CD8-positive, alpha-beta T cell (primary cell): ENCODE measurements at regions of chr22 and their contacts with region 1.

Region 1: GRCh38 chr22:23786752-23787599 is at the start of gene SMARCB1:
- DNase-seq: peak; percentile 79 to 94 (median 90)
- ATAC-seq: peak; percentile 86
- H3K4me3 ChIP-seq: peak within 1 kb of the TSS; percentile 74
- H3K4me3 Mint-ChIP-seq: peak within 1 kb of the TSS; percentile 89
- H3K27ac ChIP-seq: peak within 1 kb of the TSS; percentile 87 to 97
- H3K27ac Mint-ChIP-seq: peak within 1 kb of the TSS; percentile 93
- H3K4me1 ChIP-seq: peaks cover 37% of the 10 kb centered on the region
- H3K4me1 Mint-ChIP-seq: peaks cover 47% of the 10 kb centered on the region
- H3K27me3 ChIP-seq: no peaks in the 10 kb centered on the region
- H3K27me3 Mint-ChIP-seq: no peaks in the 10 kb centered on the region
- CTCF ChIP-seq: no peak
- total RNA-seq, gene SMARCB1: 47.1 to 51.7 TPM

Region 2: DNA sequence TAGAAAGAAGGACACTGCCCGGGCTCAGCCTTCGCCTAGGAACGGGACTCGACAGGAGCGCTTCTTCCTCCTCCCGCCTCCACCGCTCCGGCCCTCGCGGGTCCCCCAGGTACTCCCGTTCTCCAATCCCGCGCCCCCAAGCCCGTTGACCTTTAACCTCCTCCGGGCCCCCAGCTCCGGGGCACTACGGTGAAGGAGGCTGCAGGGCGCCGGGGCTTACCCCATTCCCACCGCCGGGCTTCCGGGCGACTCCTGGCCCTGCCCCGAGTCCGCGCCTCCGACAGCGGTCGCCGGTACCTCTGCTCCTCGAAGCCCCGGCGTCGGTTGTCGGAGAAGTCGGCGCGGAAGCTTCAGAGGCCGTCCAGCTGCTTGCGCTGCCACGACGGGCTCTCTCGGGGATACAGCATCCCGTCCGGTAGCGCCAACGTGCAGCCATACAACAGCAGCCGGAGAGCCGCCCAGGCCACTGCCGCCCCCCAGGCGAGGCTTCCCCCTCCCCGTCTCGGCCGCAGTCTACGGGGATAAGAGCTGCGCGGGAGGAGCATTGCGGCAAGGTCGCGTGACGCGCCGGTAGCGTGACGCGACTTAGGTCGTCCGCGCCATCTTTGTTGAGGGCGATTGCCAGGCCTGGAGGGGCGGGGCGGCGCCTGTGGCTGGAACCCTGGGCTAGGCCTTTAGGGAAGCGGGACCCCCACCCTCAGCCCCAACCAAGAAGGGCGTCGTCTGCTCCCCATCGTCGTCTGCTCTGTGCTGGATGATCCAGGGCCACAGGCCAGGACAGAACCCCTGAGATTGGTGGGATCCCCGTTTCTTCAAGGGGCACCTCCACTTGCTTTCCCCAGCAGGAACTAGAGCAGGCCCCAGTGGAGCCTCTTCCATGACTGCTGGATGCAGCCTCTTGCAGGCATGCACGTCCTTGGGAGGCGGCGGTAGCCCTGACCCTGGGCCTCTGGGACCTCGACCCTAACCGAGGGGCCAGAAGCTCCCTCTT is 69.9 kb before region 1 on chr22:
- CTCF ChIA-PET with region 1: no interaction called
- POLR2A ChIA-PET with region 1: interaction called, 4 read pairs
- intact Hi-C with region 1: loop called (anchors 1 to 2 kb)
- DNase-seq: peak; percentile 66 to 91 (median 83)
- ATAC-seq: peak; percentile 96
- H3K4me3 ChIP-seq: peak overlapping the region; percentile 94 to 99
- H3K4me3 Mint-ChIP-seq: peak overlapping the region; percentile 82
- H3K27ac ChIP-seq: peak overlapping the region; percentile 75 to 90
- H3K27ac Mint-ChIP-seq: peak overlapping the region; percentile 88
- H3K4me1 ChIP-seq: peaks cover 15% of the 10 kb centered on the region
- H3K4me1 Mint-ChIP-seq: peaks cover 24% of the 10 kb centered on the region
- H3K27me3 ChIP-seq: no peaks in the 10 kb centered on the region
- H3K27me3 Mint-ChIP-seq: no peaks in the 10 kb centered on the region
- CTCF ChIP-seq: no peak

Region 3: GRCh38 chr22:23767673-23768548 is 19.1 kb before region 1 on chr22 and contains the start of gene CHCHD10:
- CTCF ChIA-PET with region 1: interaction called, 6 read pairs
- POLR2A ChIA-PET with region 1: interaction called, 5 read pairs
- intact Hi-C with region 1: loop called (anchors 1 kb)
- DNase-seq: peak; percentile 54 to 84 (median 77)
- ATAC-seq: peak; percentile 70
- H3K4me3 ChIP-seq: peak within 1 kb of the TSS; percentile 85 to 97
- H3K4me3 Mint-ChIP-seq: peak within 1 kb of the TSS; percentile 82
- H3K27ac ChIP-seq: peak within 1 kb of the TSS; percentile 58 to 72
- H3K27ac Mint-ChIP-seq: peak within 1 kb of the TSS; percentile 52
- H3K4me1 ChIP-seq: peaks cover 63% of the 10 kb centered on the region
- H3K4me1 Mint-ChIP-seq: peaks cover 42% of the 10 kb centered on the region
- H3K27me3 ChIP-seq: no peaks in the 10 kb centered on the region
- H3K27me3 Mint-ChIP-seq: no peaks in the 10 kb centered on the region
- CTCF ChIP-seq: peak; percentile 66
- total RNA-seq, gene CHCHD10: 40.7 to 52.4 TPM

Region 4: DNA sequence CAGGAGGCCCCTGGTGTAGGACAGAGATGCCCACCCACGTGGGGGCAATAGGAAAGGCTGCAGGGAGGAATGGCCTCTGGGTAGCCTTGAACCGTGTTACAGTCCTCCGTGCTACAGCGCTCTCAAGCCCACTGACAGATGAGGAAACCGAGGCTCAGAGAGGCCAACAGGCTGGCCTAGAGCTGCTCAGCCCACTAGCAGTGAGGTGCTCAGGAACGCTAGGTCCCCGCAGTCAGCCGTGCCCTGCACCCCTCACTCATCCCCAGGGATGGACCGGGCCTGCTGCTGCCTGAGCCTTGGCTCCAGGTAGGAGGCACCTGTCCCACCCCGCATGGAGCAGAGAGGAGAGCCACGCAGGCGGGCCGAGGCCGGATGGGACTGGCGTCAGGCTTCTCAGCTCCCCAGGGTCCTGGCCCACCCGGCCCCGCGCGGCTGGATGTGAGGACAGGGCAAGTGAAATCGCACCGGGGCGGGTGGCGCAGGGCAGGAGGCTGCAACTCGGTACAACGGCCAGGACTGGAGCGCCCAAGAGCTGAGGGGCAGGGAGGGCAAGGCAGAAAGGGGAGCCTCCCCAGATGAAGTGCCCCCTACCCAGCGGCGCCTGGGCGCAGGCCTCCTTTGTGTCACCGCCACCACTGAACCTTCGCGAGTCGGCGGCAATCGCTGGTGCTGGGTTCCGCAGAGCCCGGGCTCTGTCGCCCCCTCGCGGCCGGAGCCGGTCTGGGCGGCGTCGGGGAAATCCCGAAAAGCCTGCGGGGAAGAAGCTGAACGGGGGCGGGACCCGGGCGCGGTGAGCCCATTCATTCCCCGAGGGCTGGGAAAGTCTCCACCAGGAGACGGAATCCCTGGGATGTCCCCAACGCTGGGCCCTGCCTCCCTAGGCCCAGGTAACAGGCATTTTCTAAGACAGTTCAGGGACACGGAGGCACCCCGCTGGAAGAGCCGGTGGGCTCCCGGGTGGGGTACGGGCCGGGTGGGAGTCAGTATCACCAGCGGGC is 62.3 kb after region 1 on chr22:
- CTCF ChIA-PET with region 1: interaction called, 11 read pairs
- POLR2A ChIA-PET with region 1: no interaction called
- intact Hi-C with region 1: no loop called
- DNase-seq: peak; percentile 70 to 93 (median 83)
- ATAC-seq: peak; percentile 98
- H3K4me3 ChIP-seq: no peak overlapping the region
- H3K4me3 Mint-ChIP-seq: no peak overlapping the region
- H3K27ac ChIP-seq: no peak overlapping the region
- H3K27ac Mint-ChIP-seq: no peak overlapping the region
- H3K4me1 ChIP-seq: peaks cover 3% of the 10 kb centered on the region
- H3K4me1 Mint-ChIP-seq: no peaks in the 10 kb centered on the region
- H3K27me3 ChIP-seq: no peaks in the 10 kb centered on the region
- H3K27me3 Mint-ChIP-seq: no peaks in the 10 kb centered on the region
- CTCF ChIP-seq: peak; percentile 96

Region 5: DNA sequence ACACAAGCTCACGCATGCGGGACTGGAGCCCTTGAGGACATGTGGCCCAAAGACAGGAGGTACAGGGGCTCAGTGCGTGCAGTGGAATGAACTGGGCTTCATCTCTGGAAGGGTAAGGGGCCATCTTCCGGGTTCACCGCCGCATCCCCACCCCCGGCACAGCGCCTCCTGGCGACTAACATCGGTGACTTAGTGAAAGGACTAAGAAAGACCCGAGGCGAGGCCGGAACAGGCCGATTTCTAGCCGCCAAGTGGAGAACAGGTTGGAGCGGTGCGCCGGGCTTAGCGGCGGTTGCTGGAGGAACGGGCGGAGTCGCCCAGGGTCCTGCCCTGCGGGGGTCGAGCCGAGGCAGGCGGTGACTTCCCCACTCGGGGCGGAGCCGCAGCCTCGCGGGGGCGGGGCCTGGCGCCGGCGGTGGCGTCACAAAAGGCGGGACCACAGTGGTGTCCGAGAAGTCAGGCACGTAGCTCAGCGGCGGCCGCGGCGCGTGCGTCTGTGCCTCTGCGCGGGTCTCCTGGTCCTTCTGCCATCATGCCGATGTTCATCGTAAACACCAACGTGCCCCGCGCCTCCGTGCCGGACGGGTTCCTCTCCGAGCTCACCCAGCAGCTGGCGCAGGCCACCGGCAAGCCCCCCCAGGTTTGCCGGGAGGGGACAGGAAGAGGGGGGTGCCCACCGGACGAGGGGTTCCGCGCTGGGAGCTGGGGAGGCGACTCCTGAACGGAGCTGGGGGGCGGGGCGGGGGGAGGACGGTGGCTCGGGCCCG is 107.2 kb after region 1 on chr22 and contains the start of gene MIF:
- CTCF ChIA-PET with region 1: no interaction called
- POLR2A ChIA-PET with region 1: no interaction called
- intact Hi-C with region 1: loop called (anchors 1 to 10 kb)
- DNase-seq: peak; percentile 88 to 98 (median 94)
- ATAC-seq: peak; percentile 82
- H3K4me3 ChIP-seq: peak within 1 kb of the TSS; percentile 66 to 79
- H3K4me3 Mint-ChIP-seq: peak within 1 kb of the TSS; percentile 93
- H3K27ac ChIP-seq: peak within 1 kb of the TSS; percentile 75 to 92
- H3K27ac Mint-ChIP-seq: peak within 1 kb of the TSS; percentile 95
- H3K4me1 ChIP-seq: peaks cover 16% of the 10 kb centered on the region
- H3K4me1 Mint-ChIP-seq: peaks cover 23% of the 10 kb centered on the region
- H3K27me3 ChIP-seq: no peaks in the 10 kb centered on the region
- H3K27me3 Mint-ChIP-seq: no peaks in the 10 kb centered on the region
- CTCF ChIP-seq: peak; percentile 76
- total RNA-seq, gene MIF: 181 to 191 TPM

Region 6: DNA sequence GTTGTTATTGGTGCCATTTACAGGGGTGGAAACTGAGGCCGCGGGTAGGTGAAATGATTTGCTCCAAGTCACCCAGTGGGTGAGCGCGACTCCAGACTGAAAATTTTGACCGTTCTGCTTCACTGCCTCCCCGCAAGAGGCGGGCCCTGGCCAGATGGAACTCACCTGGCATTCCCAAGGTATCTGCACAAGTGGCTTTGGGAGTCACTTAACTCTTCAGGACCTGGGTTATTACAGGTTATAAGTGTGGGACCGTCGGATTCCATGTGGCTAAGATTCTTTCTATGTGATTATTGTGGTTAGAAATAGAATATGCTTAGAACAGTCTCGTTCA is 224.7 kb after region 1 on chr22:
- CTCF ChIA-PET with region 1: no interaction called
- POLR2A ChIA-PET with region 1: interaction called, 5 read pairs
- intact Hi-C with region 1: loop called in 1 of 2 experiments (anchors 1 kb)
- DNase-seq: no peak
- ATAC-seq: no peak
- H3K4me3 ChIP-seq: peak overlapping the region; percentile 71 to 87
- H3K4me3 Mint-ChIP-seq: peak overlapping the region; percentile 97
- H3K27ac ChIP-seq: peak overlapping the region; percentile 69 to 77
- H3K27ac Mint-ChIP-seq: peak overlapping the region; percentile 94
- H3K4me1 ChIP-seq: peaks cover 10% of the 10 kb centered on the region
- H3K4me1 Mint-ChIP-seq: peaks cover 40% of the 10 kb centered on the region
- H3K27me3 ChIP-seq: no peaks in the 10 kb centered on the region
- H3K27me3 Mint-ChIP-seq: no peaks in the 10 kb centered on the region
- CTCF ChIP-seq: no peak